ENCODE measurements at regions of chr20 and their contacts with region 1.

Region 1: DNA sequence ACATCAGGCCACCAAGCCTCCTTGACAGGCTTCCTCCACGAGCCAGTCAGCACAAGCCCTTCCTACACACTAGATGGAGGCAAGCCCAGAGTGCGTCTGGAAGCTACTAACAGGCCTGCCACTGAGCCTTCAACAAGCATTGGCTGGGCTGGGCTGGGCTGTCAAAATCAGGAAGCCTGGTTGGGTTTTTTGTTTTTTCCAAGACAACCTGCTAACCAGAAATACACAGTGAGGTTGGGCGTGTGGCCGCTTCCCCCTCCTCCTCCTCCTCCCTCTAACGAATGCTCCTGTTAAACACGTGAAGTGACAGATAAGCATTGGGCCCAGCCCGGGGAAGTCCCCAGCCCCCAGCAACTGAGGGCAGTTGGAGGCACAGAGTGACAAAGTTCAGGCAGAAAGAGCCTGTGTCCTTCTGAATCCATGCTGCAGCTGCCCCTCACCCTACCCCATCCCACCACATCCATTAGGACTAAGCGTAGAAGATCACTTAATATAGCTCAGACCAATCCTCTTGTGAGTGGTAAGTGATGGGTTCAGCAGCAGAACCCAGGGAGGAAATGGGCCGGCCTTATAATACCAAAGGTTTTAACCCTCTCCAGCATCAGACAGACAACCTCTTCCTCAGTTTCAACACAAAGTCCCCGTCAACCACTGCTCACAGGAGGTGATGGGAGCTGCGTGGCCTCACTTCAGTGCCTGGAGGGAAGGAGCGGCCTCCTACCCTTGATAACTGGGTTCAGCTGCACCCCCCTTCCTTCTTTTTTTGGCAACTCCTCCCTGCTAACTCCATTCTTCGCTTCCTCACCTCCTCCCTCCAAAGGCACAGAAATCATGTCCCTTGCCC is 1.1 kb downstream of the NFATC2 start:
- DNase-seq: peak; percentile 86
- H3K4me3 Mint-ChIP-seq: peak overlapping the region; percentile 100
- H3K27ac Mint-ChIP-seq: peak overlapping the region; percentile 100
- H3K4me1 Mint-ChIP-seq: peaks cover 63% of the 10 kb centered on the region
- H3K27me3 Mint-ChIP-seq: peaks cover 9% of the 10 kb centered on the region

Region 2: DNA sequence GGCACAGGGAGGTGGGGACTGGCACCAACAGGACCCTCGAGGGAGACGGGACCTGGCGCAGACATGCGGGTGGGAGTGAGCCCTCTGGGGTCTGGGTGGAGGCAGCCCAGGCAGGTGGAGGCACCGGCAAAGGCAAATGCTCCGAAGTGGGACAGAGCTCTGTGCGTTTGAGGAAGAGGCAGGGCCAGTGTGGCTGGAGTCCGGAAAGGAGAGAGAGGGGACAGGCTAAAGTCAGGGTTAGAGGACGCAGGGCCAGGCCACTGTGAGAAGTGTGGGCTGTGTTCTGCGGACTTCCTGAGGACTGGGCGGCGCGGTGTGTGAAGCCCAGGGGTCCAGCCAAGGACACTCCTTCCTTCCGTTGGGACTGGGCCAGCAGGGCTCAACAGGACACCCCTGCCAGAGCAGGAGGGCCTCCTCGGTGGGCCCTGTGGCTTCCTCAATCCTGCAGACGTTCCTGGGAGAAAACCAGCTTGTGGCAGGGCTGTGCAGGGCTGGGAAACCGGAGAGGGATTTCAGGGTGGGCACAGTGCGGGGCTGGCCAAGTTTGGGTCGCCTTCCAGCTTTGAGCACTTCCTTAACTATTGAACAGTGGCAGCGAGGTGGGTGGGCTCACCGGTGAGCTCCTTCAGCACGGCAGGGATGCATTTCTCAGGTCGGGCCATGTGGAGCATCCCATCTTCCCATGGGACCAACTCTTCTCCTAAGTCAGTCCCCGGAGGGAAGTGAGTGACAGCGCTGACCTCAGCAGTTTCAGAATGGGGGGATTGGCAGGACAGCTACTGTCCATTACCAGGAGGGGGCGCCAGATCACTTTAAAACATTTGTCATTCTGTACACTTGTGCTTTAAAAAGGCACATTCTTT is 560.3 kb before region 1 on chr20:
- intact Hi-C with region 1: loop called (anchors 2 kb)
- DNase-seq: peak; percentile 30
- H3K4me3 Mint-ChIP-seq: no peak overlapping the region
- H3K27ac Mint-ChIP-seq: peak overlapping the region; percentile 93
- H3K4me1 Mint-ChIP-seq: peaks cover 16% of the 10 kb centered on the region
- H3K27me3 Mint-ChIP-seq: peaks cover 12% of the 10 kb centered on the region

Region 3: DNA sequence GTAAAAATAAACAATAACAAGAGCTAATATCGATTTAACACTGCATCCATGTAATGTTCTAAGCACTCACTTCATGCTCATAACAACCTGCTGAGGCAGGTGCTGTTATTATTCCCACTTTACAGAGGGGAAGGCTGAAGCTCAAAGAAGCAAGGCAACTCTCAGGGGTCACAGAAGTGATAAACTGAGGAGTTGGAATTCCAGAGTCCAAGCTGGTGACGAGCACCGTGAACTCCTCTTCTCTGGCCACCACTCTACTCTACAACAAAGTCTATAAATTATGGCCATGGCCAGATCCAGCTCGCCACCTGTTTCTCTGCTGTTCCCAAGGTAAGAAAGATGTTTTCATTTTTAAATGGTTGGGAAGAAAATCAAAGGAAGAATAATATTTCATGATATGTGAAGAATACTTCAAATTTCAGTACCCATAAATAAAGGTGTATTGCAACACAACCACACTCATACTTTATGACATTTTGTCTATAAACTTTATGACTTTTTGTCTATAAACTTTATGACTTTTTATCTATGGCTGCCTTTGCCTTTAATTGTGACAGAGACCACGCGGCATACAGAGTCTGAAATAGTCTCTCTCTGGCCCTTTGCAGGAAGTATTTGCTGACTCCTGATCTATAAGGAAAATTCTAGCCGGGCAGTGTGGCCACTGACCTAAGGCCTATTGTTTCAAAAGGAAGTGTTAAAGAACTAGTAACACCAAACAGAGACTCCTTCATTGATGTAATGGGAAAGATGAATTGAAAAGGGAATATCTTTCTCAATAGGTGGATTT is 405.3 kb before region 1 on chr20:
- intact Hi-C with region 1: no loop called
- DNase-seq: no peak
- H3K4me3 Mint-ChIP-seq: no peak overlapping the region
- H3K27ac Mint-ChIP-seq: no peak overlapping the region
- H3K4me1 Mint-ChIP-seq: no peaks in the 10 kb centered on the region
- H3K27me3 Mint-ChIP-seq: peaks cover 15% of the 10 kb centered on the region

Region 4: DNA sequence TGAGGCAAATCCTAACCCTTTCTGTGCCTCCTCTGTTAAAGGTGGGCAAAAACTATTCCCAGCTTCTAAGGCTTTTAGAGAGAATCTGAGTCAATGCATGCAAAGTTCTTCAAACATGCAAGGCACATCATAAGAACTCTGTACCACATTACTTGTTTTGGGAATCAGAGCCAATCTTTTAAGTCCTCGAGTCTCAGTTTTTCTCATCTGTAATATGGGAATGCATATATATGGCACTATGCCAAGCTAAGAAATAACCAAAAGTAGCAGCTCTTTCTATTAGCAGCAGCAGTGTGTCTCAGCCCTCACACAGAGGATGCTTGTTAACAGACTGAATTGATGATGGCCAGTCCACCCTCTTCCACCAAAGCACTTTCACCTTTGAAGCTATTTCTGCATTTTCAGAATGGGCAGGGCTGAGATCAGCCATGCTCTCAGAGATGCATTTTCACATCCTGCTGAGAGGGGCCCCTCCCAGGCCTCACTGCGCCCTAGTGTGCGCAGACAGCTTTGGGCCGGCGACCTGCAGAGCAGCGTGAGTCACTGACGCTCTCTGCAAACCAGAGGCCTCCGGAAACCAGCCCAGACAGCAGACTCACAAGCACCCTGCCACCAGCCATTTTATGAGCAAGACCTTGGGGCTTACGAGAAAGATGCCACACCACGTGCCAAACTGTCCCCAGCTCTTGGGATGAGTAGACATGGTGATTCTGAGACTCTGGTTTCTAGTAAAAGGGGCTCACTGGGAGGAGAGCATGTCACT is 136.9 kb before region 1 on chr20:
- intact Hi-C with region 1: loop called (anchors 1 kb)
- DNase-seq: peak; percentile 85
- H3K4me3 Mint-ChIP-seq: peak overlapping the region; percentile 52
- H3K27ac Mint-ChIP-seq: peak overlapping the region; percentile 96
- H3K4me1 Mint-ChIP-seq: peaks cover 93% of the 10 kb centered on the region
- H3K27me3 Mint-ChIP-seq: no peaks in the 10 kb centered on the region

Region 5: DNA sequence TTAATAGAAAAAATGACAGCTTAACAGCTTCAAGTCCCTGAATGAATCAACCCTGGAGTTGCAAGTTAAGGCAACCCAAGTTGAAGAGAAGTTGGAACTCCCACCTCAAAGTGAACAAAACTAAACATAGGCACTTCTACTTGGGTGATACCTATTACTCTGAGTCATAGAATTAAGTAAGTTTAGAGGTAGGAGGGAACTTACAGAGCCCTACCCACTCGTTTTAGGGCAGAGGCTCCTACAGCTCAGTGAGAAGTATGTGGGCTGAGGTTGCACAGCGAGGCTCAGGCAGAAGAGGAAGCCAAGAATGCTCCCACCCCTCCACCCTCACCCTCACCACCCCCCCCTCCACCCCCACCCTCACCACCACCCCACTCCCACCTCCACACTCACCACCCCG is 41.1 kb before region 1 on chr20:
- intact Hi-C with region 1: loop called (anchors 1 kb)
- DNase-seq: peak; percentile 48
- H3K4me3 Mint-ChIP-seq: no peak overlapping the region
- H3K27ac Mint-ChIP-seq: peak overlapping the region; percentile 81
- H3K4me1 Mint-ChIP-seq: peaks cover 86% of the 10 kb centered on the region
- H3K27me3 Mint-ChIP-seq: no peaks in the 10 kb centered on the region

Region 6: DNA sequence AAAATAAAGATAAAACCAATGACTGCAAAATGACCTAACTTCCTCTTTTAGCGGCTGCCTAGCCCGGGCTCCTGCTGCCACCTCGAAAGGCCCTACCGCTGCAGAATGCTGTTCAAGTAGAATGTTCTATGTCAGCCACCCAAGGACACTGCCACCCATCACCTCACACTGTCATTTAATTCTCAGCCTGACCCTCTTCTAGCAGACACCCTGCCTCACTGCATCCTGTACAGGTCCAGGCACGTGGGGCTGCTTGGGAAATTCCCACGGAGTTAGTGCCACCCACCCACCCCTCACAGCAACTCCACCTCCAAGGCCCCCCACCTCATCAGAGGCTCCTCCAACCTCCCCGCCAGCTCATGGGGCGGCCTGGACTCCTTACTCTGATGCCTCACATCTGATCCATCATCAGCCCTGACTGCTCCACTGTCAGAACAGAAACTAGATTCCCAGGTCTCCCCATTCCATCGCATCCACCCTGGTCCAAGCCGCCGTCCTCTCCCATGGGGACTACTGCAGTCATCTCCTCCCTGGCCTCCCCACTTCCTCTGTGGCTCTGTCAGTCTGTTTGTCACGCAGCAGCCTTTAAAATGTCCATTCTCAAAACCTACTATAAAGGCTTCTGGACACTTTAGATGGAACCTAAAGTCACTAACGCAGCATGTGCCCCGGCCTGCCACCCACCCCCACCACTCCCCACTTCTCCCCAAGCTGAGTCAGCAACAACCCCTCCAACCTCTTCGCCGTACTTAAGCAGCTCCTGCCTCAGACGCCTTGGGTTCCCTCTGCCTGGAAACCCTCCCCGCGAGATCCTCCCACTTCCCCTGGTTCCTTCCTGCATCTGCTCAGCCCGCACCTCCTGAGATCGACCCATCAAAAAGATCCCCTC is 15.9 kb before region 1 on chr20:
- intact Hi-C with region 1: loop called (anchors 2 kb)
- DNase-seq: no peak
- H3K4me3 Mint-ChIP-seq: peak overlapping the region; percentile 72
- H3K27ac Mint-ChIP-seq: peak overlapping the region; percentile 96
- H3K4me1 Mint-ChIP-seq: peaks cover 80% of the 10 kb centered on the region
- H3K27me3 Mint-ChIP-seq: no peaks in the 10 kb centered on the region

Region 7: DNA sequence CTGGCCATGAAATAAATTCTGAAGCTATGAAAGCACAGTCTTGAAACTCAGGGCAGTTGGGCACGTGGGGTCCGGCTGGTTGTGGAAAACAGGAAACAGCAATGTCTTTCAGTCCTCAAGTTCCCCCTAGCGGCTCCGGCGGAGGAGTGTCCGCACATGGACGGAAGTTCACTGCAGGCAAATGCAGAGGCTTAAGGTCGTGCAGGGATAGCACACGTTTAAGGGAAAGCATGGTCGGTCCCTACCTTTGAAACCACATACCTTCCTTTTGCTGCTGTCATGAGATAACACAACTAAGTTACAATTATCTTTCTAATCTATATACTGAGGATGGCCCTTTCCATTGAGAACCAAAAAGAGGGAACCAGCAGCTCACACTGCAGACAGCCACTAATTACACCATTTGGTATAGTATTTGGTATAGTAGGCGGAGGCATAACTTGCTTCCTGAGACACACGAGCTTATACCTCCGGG is 53.7 kb after region 1 on chr20:
- intact Hi-C with region 1: loop called (anchors 1 kb)
- DNase-seq: peak; percentile 67
- H3K4me3 Mint-ChIP-seq: peak overlapping the region; percentile 54
- H3K27ac Mint-ChIP-seq: peak overlapping the region; percentile 82
- H3K4me1 Mint-ChIP-seq: peaks cover 46% of the 10 kb centered on the region
- H3K27me3 Mint-ChIP-seq: peaks cover 3% of the 10 kb centered on the region

Region 8: DNA sequence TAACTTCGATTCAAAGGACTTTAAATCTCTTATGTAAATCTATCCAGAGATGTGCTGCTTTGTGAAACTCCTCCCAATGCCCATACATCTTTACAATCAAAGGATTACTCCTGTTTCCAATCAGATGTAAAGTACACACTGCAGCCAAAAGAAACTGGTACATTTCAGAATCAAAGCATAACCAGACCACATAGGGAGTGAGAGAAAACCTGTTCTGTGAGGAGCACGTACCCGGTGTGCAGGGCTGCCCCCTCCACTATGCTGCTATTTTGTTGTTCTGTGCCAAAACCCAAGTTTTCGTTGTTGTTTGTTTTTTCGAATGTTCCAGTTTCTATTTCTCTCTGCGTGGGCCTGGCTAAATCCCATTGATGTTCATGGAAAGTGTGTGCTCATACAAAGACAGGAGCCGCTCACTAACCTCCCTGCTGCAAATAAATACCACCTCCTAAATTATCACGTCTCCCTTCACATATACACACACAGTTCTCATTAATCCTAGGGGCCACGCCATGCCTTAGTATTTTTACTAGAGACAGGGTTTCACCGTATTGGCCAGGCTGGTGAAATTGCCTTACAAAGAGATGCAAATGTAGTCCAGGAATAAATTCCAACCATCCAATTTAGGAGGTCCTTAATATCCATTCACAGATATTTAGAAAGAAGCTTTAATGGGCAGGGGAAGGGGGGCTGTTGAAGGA is 173.9 kb after region 1 on chr20:
- intact Hi-C with region 1: loop called (anchors 5 kb)
- DNase-seq: no peak
- H3K4me3 Mint-ChIP-seq: peak overlapping the region; percentile 50
- H3K27ac Mint-ChIP-seq: peak overlapping the region; percentile 88
- H3K4me1 Mint-ChIP-seq: peaks cover 39% of the 10 kb centered on the region
- H3K27me3 Mint-ChIP-seq: peaks cover 5% of the 10 kb centered on the region

Measured in activated T-helper 1 cell treated with anti-CD3 and anti-CD28 coated beads, Interleukin-12 subunit alpha, Interleukin-12 subunit beta, Interleukin-2, Interleukin-4 antibody, amounts not matched to agents 30 ng/mL and 10 ng/mL and 1 ng/mL, durations not matched to agents 14 hours and 24 hours and 36 hours (primary cell).